Left ventricle myocardium superior (tissue), 1 donor: ENCODE measurements at regions of chr10 and their contacts with region 1.

Region 1: DNA sequence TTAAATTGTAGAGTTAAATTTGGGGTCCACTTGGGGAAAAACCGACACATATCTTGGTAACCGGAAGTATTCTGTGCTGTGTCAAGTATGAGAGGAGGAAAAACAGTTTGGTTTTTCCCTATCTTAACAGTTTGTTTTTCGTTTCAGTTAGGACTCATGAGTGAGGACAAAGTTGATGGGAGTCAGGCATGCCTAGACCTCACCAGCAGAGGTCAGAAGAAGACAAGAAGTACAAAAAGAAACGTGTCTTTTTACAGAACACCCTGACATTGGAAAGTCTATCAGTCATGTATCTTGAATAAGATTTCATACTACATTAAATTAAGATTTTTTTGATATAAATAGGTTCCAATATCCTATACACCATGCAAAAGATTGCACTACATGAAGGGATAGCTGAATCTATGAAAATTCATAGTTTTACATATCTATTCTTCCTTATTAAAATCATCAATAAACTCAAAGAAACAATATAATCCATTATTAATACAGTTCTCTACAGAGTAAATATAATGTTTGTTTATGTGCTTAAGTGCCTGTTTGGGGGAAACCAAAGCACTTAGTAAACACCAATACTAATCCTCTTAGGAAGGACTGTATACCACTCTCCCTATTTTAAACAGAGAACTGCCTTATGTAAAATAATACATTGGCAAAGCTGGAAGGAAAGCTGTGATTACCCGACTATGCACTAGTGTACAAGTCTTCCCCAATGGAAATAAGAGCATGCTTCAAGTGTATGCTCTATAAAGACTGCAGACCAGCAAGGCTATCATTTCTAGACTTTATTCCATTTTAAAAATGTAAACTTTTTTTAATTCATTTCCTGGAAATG is 95.6 kb downstream of the USP6NL start:
- DNase-seq: no peak
- ATAC-seq: peak; percentile 85

Region 2: DNA sequence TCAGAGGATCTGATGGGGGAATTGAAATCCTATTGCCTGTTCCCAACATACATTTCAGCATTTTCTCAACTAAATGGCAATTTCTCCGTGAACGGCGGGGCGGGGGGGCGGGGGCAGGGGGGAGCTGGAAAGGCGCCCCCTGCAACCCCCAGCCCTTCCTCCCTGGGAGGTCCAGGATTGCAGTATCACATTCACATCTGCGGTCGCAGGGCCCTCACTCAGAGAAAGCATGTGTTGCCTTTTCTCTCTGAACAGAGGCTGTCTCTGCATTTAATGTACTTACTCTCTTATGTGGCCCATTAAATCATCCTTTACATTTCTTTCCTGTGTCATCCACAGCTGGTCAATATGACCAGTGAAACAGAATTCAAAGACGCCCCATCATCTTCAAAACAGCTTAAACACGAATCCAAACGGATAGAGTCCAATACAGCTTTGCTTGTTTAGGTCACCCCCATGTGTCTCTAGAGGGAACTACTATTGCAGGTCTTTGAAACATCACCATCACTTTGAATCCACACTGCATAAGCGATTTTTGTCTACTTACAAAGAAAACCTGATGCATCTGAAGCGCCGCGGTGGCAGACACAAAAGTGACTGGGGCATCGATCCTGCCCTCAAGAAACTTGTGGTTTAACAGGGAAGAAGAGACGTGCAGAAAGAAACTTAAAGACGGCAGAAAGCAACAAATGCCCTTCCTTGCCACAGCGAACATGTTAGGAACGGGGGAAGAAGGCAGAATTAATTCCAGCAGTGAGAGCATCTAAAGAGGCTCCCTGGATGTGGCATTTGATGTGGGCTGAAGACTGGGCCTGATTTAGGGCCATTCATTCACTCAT is 209.3 kb after region 1 on chr10:
- intact Hi-C with region 1: loop called (anchors 10 kb)
- DNase-seq: no peak
- ATAC-seq: peak; percentile 84

Region 3: DNA sequence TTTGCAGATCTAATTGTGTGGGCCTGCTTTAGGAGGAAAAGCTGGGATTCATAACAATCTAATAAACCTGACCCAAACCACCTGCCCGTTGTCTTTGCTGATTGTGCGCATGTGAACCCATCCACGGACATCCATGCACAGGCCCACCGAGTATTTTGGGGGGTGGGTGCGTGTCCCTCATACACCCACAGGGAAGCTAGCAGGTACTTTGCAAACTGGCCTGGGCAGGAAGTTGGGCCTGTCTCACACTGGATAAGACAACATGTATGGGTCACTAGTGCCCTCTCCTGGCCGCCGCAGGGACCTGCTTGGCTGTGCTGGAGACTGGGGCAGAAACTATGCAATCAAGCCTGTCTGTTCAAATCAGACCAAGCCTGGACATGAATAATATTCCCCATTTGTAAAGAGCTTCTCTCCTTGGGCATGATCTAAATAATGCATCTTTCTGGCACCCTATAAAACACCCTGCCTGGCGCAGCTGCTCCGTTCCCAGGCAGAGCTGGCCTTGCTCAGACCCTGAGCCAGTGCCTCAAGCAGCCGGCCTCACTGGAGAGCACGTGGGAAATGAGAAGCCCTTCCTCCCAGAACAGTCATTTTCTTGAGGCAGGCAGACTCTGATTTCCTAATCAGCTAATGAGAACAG is 242.1 kb after region 1 on chr10:
- intact Hi-C with region 1: loop called (anchors 2 kb)
- DNase-seq: peak; percentile 91
- ATAC-seq: peak; percentile 82